Heart right ventricle (tissue), 16 donors: ENCODE measurements at regions of chr7 and their contacts with region 1.

Region 1: GRCh38 chr7:81367335-81367931 is 402.4 kb downstream of the HGF start:
- DNase-seq: no peak
- ATAC-seq: peak in 2 of 8 donors; percentile 62 to 69
- H3K4me3 ChIP-seq: no peak overlapping the region
- H3K27ac ChIP-seq: no peak overlapping the region
- H3K4me1 ChIP-seq: no peaks in the 10 kb centered on the region
- H3K27me3 ChIP-seq: no peaks in the 10 kb centered on the region
- CTCF ChIP-seq: no peak

Region 2: DNA sequence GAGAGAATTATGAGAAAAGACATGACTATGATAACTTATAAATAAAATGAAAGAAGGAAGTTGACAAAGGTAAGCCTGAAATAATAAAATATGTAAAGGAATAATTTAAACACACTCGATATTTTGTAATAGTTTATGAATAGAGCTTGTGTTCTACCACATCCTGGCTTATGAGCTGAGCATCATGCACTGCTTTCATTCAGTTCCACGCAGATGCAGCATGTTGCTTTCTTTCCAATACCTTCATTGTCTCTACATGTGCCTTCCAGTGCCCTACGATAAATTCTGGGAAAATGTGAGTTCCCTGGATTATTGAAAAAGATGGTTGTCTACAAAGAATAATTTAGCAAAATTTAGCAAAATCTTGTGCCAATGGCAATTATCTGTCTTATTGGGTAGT is 49.7 kb before region 1 on chr7:
- intact Hi-C with region 1: loop called in 1 of 10 experiments (anchors 10 kb)
- DNase-seq: no peak
- ATAC-seq: no peak
- H3K4me3 ChIP-seq: no peak overlapping the region
- H3K27ac ChIP-seq: no peak overlapping the region
- H3K4me1 ChIP-seq: no peaks in the 10 kb centered on the region
- H3K27me3 ChIP-seq: no peaks in the 10 kb centered on the region
- CTCF ChIP-seq: no peak

Region 3: GRCh38 chr7:81638216-81638615 is 270.8 kb after region 1 on chr7:
- intact Hi-C with region 1: loop called in 1 of 10 experiments (anchors 10 kb)
- DNase-seq: no peak
- ATAC-seq: no peak
- H3K4me3 ChIP-seq: no peak overlapping the region
- H3K27ac ChIP-seq: peak overlapping the region in 3 of 10 donors; percentile 15 to 55 (median 24)
- H3K4me1 ChIP-seq: peaks cover 0 to 17% (median 0%) of the 10 kb centered on the region in 9 donors
- H3K27me3 ChIP-seq: no peaks in the 10 kb centered on the region
- CTCF ChIP-seq: no peak

Region 4: DNA sequence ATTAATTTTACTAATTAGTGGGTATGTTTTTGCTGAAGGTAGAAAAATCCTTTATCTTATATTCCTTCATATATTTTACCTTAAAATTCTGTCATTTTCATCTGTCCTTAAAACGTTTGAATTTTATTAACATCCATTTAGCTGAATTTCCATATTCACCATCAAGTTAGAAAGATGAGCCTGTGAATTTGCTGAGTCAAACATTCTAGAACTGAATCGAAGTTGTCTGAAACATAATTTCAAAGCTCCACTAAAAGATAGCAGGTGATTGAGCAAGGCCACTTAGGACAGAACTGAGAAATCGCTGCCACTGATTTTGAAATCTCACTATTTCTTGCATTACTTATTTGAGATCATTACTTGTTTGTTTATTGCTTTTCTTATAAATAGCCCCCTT is 384.9 kb after region 1 on chr7:
- intact Hi-C with region 1: no loop called
- DNase-seq: no peak
- ATAC-seq: no peak
- H3K4me3 ChIP-seq: no peak overlapping the region
- H3K27ac ChIP-seq: no peak overlapping the region
- H3K4me1 ChIP-seq: no peaks in the 10 kb centered on the region
- H3K27me3 ChIP-seq: no peaks in the 10 kb centered on the region
- CTCF ChIP-seq: no peak